GM10248 (cell line): ENCODE measurements at regions of chr16 and their contacts with region 1.

Region 1: GRCh38 chr16:71311553-71312158 is 22.5 kb upstream of the CMTR2 start:
- DNase-seq: peak; percentile 41
- CTCF ChIP-seq: peak; percentile 86

Region 2: DNA sequence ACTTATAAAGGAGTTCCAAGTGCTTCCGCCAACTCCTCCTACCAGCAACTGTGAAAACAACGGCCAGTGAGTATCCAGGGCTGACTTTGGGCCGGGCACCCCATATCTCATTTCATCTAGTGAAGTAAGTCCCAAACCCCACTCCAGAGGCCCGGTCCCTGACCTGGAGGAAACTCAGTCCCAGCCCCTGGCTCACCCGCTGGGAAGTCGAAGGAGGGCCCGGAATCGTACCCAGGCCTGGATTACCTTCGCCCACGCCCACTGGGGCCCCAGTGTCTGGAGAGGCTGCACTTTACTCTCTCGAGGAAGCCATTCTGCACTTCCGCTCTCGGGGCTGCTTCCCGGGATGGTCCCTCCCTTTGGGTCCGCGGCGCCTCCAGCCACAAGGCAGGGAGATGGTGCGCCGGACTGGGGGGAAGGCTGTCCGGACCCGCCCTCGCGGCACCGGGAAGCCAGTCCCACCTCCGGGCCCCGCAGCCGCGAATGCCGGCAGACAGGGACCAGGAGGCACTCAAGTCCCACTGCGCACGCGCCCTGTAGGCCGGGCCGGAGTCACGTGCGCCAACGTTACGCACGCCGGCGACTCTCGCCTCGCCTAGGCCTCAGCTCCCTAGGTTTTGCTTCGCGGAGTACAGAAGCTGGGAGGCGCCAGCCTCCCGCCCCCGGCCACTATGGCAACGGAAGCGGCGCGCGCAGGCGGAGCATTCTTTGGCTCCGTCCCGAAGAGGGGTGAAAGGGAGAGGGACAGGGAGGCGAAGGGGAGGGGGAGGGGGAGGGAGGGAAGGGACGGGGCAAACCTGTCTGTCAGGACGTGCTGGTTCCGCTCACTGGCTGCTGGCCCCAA is 22.5 kb before region 1 on chr16 and contains the start of gene CMTR2:
- CTCF ChIA-PET with region 1: interaction called, 16 read pairs
- POLR2A ChIA-PET with region 1: no interaction called
- DNase-seq: peak; percentile 96
- CTCF ChIP-seq: no peak

Region 3: DNA sequence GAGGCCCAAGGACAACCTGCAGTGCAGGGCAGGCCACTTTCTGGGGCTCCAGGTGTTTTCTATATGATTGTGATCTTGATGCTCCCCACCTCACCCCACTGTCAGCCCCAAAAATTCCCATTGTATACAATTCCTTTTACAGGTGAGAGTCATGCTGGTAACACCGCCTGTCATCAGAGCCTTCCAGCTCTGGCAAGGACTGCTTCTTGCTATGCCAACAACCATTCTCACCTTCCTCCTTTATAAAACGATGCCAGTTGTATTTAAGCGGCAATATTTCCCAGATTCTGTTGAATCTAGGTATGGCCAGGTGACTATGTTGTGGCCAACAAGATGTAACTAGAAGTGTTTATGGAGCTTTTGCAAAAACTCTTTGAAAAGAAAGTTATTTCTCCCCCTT is 16.5 kb after region 1 on chr16:
- CTCF ChIA-PET with region 1: interaction called, 15 read pairs
- POLR2A ChIA-PET with region 1: no interaction called
- DNase-seq: no peak
- CTCF ChIP-seq: no peak

Region 4: GRCh38 chr16:71348262-71349085 is 36.8 kb after region 1 on chr16:
- CTCF ChIA-PET with region 1: interaction called, 12 read pairs
- POLR2A ChIA-PET with region 1: no interaction called
- DNase-seq: no peak
- CTCF ChIP-seq: no peak

Region 5: DNA sequence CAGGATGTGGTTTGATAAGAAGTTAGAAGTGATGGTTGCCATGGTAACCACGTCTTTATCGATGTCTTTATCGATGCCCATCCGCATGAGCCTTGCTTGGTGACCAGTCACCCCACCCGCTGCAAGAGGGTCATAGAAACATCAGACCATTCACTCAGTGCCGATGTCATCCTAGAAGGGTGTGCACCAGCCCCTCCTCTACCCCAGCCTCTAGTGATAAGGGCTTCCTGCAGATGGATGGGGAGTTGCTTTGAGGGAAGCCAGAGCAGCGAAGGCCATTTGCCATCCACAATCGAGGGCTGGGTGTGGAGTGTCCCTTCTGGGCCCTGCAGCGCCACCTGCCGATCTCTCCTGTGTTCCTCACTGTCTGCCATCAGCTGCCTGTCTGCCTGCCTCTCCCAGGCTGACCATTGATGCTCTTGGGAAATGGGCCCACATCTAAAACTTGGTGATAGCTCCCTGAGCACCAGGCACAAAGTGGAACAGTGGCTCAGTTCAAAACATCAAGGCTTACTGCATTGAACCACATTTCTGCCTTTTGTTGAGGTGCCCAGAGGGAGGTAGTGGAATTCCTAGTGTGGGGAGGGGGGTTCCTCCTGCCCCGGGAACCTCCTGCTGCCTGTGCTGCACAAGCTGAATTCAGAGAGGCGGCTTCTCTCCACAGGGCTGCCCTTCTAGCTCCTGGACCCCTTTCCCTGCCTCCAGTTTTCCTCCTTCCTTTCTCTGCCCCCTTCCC is 55.8 kb after region 1 on chr16:
- CTCF ChIA-PET with region 1: no interaction called
- POLR2A ChIA-PET with region 1: no interaction called
- DNase-seq: peak; percentile 62
- CTCF ChIP-seq: peak; percentile 71

Region 6: GRCh38 chr16:71645453-71645852 is 333.8 kb after region 1 on chr16:
- CTCF ChIA-PET with region 1: no interaction called
- POLR2A ChIA-PET with region 1: no interaction called
- DNase-seq: peak; percentile 34
- CTCF ChIP-seq: peak; percentile 25

Region 7: DNA sequence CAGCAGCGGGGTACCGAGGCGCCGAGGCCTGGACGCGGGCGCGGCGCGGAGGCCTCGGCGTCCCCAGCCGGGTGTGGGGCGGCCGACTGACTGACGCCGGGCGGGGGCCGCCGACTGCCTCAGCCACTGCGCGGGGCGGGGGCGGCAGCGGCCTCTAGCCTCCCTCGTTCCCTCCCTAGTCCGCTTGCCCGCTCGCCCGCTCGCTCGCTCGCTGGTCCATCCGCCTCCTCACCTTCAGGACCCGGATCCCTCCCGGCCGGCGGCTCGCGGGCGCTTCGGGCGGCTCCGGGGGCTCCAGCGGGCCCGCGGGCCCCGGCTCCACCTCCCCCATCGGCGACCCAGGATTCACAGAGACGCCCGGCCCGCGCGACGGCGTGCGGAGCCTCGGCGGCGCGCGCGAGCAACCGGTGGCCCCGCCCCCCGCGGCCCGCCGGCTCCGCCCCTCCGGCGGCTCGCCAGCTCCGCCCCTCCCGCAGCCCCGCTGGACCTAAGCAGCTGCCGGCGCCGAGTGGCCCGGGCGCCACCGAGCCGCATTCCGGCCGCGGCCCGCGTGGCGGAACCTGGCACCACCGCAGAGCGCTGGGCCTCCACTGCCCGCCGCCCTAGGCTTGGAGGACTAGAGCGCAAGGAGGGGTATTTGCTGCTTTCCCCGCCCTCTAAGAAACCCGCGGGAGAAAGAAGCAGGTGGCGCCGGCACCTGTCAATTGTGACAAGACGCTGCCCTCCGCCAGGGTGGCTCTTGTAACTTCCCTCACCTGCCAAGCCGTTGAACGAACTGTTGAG is 412.1 kb after region 1 on chr16:
- CTCF ChIA-PET with region 1: no interaction called
- POLR2A ChIA-PET with region 1: no interaction called
- DNase-seq: peak; percentile 93
- CTCF ChIP-seq: no peak